Activated CD4-positive, alpha-beta memory T cell treated with anti-CD3 and anti-CD28 coated beads for 36 hours (primary cell): ENCODE measurements at regions of chr14 and their contacts with region 1.

Region 1: DNA sequence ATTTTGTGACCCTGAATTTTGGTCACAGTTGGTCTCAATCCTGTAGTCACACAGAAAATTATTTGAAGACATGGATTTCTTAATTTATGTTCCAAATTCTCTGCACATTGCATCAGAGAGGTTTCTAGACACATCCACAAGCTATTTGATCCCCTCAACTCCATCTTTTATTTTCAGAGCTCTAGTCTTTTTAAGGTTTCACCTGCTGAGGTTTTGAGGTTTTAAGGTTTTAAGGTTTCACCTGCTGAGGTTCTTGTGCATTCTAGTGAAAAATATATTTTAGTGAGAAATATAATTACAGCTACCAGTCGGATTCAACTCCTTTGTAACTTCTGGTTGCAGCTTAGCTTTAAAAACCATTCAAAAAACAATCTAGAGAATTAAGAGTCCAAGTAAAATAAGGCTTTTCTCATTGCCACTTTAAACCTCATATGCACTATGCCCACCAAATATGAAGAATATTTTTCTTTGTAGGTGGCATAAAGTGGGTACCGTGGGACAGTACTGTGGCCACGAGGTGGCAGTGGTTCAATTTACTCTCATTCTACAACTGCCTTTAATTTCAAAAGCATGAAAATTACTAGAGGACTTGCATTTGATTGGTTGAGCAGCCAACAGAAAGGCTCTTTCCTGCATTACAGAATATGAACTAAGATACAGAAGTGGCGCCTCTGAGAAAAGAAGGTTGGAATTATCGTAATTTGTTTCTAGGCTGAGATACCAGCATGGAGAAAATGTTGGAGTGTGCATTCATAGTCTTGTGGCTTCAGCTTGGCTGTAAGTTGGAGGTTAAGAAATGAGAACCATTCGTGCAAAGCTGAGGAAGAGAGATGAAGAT is 366.5 kb upstream of the OR4E1 start:
- DNase-seq: peak; percentile 52
- H3K4me3 Mint-ChIP-seq: peak overlapping the region; percentile 70
- H3K27ac Mint-ChIP-seq: peak overlapping the region; percentile 81
- H3K4me1 Mint-ChIP-seq: peaks cover 3% of the 10 kb centered on the region
- H3K27me3 Mint-ChIP-seq: no peaks in the 10 kb centered on the region

Region 2: DNA sequence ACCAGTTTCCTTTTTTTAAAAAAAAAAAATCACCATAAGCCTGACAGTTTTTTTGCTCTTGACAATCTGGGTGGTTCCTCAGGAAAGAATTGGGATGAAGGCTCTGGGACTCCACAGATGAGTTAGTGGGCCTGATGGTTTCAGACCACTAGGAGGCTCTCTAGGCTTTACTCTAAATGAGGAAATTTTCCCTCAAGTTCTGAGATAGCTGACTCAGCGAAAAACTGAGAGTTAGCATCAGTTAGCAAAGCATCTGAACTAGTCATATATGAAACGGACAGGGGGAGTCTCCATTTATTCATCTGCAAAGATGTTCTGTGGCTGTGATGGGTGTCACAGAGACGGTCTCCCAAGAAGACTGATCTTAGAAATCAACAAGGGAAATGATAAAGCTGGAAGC is 52.2 kb before region 1 on chr14:
- CTCF ChIA-PET with region 1: interaction called, 13 read pairs
- POLR2A ChIA-PET with region 1: no interaction called
- intact Hi-C with region 1: no loop called
- DNase-seq: peak; percentile 25
- H3K4me3 Mint-ChIP-seq: no peak overlapping the region
- H3K27ac Mint-ChIP-seq: peak overlapping the region; percentile 92
- H3K4me1 Mint-ChIP-seq: peaks cover 11% of the 10 kb centered on the region
- H3K27me3 Mint-ChIP-seq: no peaks in the 10 kb centered on the region

Region 3: DNA sequence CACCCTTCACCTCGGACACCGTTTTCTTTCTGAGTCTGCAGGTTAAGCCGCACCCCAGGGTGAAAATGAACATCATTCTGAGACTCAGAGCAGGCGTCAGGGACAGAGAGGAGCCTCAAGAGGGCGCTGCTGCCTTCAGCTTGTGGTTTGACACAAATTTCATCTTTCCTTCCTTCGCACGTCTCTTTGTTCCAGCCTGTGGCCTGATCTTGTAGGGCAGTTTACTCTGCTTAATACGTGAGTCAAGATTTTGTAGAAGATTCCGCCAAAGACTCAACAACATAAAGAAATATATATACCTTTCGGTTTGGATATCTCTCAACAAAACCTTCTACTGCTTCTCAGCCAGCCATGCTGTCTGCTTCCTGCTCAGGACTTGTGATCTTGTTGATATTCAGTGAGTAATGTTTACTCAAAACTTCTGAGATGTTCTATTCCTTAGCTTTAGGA is 37.3 kb before region 1 on chr14:
- CTCF ChIA-PET with region 1: interaction called, 7 read pairs
- POLR2A ChIA-PET with region 1: no interaction called
- intact Hi-C with region 1: loop called (anchors 2 kb)
- DNase-seq: peak; percentile 85
- H3K4me3 Mint-ChIP-seq: peak overlapping the region; percentile 71
- H3K27ac Mint-ChIP-seq: peak overlapping the region; percentile 80
- H3K4me1 Mint-ChIP-seq: peaks cover 19% of the 10 kb centered on the region
- H3K27me3 Mint-ChIP-seq: no peaks in the 10 kb centered on the region